Head of caudate nucleus (tissue), 42 donors: ENCODE measurements at regions of chr13 and their contacts with region 1.

Region 1: DNA sequence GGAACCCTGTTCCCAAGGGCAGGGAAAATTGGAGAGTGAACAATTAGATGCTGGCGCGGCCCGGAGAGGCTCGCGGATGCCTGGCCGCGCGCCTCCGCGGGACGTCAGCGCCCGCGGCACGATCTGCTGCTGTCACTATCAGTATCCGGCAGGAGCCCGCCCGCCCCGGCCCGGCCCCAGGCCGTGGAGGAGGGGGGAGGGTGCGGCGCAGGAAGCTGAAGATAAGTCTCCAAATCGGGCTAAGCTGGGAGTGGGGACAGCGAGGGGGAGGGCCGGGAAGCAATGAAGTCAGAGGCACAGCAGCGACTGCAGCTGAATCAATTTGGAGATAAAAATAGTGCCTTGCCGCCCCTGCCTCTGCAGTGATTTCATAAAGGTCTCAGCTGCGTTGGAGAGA is 441.5 kb upstream of the KLF12 start:
- DNase-seq: peak; percentile 32 to 86 (median 68)

Region 2: DNA sequence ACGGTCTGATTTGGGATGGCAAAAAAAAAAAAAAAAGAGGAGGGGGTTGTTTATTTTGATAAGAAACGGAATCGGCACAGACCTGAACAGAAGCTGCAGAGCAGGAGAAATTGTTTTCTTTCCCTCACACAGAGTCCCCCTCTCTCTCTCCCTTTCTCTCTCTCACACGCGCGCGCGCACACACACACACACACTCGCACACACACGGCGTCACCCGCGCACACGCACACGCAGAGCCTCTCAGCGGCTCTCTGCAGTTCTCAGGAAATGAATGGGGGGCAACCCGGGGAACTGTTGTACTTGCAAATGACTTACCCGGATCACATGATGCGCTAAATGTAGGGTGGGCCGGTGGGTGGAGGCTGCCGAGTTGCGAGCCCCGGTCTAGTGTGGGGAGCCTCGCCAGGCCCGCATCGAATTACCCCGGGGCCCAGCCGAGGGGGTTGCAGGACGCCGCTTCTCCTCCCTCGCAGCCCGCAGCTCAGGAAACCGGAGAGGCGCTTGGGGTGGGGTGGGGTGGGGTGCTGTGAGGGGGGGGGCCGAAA is 442.0 kb before region 1 on chr13:
- intact Hi-C with region 1: loop called (anchors 5 kb)
- DNase-seq: peak; percentile 48 to 88 (median 74)

Region 3: DNA sequence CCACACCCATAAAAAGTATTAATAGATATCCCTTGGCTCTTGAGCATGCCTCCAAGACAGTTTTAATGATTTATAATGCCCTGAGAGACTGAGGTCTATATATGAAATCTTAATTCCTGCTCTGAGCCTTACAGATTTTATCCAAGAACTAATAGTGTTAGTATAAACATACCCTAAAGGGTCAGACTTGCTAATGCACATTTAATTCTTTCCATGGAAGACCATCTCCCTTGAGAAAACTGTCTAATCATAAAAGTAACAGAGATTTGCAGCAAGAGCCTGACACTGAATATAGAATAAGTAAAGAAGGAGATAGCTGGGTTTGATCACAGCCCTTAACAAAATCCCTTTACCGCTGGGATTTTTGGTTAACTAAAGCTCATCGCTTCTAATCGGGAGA is 209.2 kb after region 1 on chr13:
- intact Hi-C with region 1: no loop called
- DNase-seq: no peak

Region 4: DNA sequence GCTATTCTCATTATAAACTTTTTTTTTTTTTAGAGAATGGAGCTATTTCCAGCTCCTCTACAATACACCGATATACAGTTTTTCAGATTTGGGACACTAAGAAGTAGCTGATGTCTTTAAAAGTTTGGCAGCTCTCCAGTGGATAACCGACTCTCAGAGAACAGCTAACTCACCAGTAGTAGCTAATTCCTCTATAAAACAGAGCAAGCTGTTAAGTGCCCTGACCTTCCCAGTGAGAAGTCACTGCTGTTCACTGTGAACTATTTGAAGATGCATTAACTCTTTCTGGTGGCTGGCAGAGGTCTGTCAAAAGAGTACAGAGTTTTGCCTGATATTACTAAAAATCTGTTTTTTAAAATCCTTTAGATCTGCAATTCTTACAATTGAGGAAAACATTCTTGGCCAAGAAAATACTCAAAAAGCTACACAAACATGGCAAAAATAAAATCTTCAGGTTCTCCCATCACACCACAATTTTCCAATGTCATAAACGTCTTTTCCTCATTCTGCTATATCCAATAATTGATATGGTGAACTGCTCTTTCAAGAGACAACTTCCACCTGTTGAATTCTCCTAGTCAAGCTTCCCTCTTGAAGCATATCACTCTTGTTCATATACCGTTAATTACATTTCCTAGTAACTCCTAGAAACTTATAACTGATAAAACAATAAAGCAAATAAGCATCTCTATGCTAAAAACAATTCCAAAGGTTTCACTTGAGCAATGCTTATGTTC is 862.0 kb after region 1 on chr13:
- intact Hi-C with region 1: no loop called
- DNase-seq: no peak